Posterior vena cava (tissue), 2 donors: ENCODE measurements at regions of chr15 and their contacts with region 1.

Region 1: DNA sequence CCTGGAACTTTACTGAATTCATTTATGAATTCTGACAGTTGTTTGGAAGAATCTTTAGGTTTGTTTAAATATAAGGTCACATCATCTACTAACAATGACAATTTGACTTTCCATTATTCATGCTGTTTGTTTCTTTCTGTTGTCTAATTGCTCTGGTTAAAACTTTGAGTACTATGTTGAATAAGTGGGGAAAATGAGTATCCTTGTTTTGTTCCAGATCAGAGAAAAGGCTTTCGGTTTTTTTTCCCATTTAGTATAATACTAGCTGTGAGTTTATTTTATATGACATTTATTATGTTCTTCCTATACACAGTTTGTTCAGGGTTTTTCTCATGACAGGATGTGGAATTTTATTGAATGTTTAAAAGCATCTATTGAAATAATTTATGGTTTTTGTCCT is 11.3 kb upstream of the TUBGCP5 start:
- DNase-seq: no peak

Region 2: GRCh38 chr15:23003736-23004135 is 47.0 kb before region 1 on chr15:
- intact Hi-C with region 1: no loop called
- DNase-seq: no peak

Region 3: GRCh38 chr15:23118203-23118602 is 67.5 kb after region 1 on chr15:
- intact Hi-C with region 1: loop called in 1 of 2 experiments (anchors 10 kb)
- DNase-seq: no peak